Activated CD4-positive, alpha-beta memory T cell treated with anti-CD3 and anti-CD28 coated beads for 36 hours (primary cell): ENCODE measurements at regions of chr19 and their contacts with region 1.

Region 1: GRCh38 chr19:48492925-48493717 is 18.5 kb downstream of the LMTK3 start:
- DNase-seq: peak; percentile 92
- H3K4me3 Mint-ChIP-seq: peak overlapping the region; percentile 56
- H3K27ac Mint-ChIP-seq: no peak overlapping the region
- H3K4me1 Mint-ChIP-seq: peaks cover 31% of the 10 kb centered on the region
- H3K27me3 Mint-ChIP-seq: peaks cover 45% of the 10 kb centered on the region

Region 2: DNA sequence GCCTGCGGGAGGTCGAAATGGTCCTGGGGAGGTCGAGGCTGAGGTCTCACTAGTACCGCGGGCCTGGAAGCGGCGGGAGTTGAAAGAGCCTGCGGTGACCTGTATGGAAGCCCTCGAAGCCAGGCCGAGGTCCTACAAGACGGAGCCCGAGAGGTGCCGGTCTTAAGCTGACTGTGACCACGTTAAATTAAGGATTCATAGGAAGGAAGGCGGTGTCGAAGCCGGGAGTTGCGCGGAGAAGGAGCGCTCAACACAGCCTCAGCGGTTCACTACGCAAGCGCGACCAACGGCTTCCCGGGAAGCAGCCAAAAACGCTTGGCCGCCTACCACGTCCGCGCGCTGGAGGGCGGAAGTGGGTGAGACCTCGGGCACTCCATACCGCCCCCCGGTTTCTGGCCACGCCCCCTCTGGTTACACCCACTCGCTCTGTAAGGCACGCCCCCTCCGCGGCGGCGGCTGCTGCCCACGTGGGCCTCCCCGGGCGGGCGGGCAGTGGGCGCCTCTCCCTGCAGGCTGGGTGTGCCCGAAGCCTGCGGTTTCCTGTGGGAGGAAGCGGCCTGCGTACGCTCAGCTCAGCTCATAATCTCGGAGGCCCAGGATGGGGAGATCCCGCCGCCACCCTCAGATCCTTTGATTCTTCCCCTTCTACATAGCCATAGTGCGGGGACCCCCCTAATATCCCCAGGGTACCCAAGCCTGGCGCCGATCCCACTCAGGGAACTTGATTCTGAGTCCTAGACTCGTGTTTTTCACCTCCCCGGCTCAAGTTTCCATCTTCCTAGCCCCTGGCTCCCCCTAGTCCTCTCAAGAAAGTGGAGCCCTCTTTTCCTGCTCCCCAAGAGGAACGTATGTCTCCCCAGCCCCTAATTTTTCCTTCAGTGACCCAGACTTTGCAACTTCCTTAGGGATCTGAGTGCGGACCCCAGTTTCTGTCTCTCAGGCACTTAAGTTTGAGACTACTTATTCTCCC is 171.2 kb before region 1 on chr19:
- CTCF ChIA-PET with region 1: no interaction called
- POLR2A ChIA-PET with region 1: no interaction called
- intact Hi-C with region 1: loop called (anchors 5 kb)
- DNase-seq: peak; percentile 99
- H3K4me3 Mint-ChIP-seq: peak overlapping the region; percentile 88
- H3K27ac Mint-ChIP-seq: peak overlapping the region; percentile 99
- H3K4me1 Mint-ChIP-seq: peaks cover 51% of the 10 kb centered on the region
- H3K27me3 Mint-ChIP-seq: no peaks in the 10 kb centered on the region

Region 3: DNA sequence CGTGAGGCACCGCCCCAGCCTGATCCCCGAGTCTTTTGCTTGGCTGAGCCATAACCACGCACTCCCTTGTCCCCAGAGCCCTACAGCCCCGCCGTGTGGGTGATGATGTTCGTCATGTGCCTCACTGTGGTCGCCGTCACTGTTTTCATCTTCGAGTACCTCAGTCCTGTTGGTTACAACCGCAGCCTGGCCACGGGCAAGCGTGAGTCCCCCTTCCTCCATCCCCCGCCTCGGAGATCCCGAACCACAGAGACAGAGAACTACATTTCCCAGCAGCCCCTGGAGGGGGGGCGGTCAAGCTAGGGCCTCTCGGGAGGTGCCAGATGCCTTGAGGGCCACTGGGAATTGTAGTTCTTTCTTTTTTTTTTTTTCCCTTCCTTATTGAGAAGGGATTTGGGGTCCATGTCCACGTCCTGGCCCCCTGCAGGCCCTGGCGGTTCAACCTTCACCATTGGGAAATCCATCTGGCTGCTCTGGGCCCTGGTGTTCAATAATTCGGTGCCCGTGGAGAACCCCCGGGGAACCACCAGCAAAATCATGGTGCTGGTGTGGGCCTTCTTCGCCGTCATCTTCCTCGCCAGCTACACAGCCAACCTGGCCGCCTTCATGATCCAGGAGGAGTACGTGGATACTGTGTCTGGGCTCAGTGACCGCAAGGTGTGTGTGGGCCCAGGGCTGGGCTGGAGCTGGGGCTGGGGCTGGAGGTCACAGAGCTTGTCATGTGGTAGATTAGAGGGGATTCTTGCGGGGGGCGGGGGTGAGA is 73.8 kb before region 1 on chr19:
- CTCF ChIA-PET with region 1: no interaction called
- POLR2A ChIA-PET with region 1: no interaction called
- intact Hi-C with region 1: loop called (anchors 5 kb)
- DNase-seq: peak; percentile 87
- H3K4me3 Mint-ChIP-seq: peak overlapping the region; percentile 67
- H3K27ac Mint-ChIP-seq: peak overlapping the region; percentile 19
- H3K4me1 Mint-ChIP-seq: peaks cover 27% of the 10 kb centered on the region
- H3K27me3 Mint-ChIP-seq: peaks cover 9% of the 10 kb centered on the region

Region 4: DNA sequence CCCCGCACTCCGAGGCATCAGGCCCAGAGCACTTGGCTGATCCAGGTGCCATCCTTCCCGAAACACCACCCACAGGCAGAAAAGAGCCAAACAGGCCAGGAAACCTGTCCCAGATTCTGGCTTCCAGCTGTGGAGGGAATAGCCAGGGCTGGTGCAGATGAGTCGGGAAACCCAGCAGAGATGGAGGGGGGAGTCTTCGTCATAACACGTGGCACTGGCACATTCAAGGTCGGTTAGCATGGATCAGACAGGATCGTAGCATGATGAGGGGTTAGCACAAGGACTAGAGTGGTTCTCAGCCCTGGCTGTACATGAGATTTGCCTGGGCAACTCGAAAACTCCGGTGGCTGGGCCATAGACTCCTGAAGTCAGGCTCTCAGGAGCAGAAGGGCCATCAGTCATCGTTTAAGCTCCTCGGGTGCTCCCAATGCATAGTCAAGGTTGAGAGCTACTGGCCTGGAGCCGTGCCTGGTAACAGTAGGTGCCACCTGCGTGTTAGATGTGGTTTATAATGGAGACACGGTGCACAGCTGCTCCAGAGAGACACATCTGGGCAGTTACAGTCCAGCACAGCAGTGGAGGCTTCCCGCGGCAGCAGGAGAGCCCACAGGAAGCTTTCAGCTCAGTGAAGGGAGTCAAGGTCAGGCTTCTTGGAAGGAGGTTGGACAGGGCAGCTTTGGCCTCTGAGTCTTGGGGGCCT is 17.6 kb before region 1 on chr19:
- CTCF ChIA-PET with region 1: interaction called, 30 read pairs
- POLR2A ChIA-PET with region 1: no interaction called
- intact Hi-C with region 1: no loop called
- DNase-seq: no peak
- H3K4me3 Mint-ChIP-seq: no peak overlapping the region
- H3K27ac Mint-ChIP-seq: peak overlapping the region; percentile 46
- H3K4me1 Mint-ChIP-seq: peaks cover 3% of the 10 kb centered on the region
- H3K27me3 Mint-ChIP-seq: no peaks in the 10 kb centered on the region

Region 5: DNA sequence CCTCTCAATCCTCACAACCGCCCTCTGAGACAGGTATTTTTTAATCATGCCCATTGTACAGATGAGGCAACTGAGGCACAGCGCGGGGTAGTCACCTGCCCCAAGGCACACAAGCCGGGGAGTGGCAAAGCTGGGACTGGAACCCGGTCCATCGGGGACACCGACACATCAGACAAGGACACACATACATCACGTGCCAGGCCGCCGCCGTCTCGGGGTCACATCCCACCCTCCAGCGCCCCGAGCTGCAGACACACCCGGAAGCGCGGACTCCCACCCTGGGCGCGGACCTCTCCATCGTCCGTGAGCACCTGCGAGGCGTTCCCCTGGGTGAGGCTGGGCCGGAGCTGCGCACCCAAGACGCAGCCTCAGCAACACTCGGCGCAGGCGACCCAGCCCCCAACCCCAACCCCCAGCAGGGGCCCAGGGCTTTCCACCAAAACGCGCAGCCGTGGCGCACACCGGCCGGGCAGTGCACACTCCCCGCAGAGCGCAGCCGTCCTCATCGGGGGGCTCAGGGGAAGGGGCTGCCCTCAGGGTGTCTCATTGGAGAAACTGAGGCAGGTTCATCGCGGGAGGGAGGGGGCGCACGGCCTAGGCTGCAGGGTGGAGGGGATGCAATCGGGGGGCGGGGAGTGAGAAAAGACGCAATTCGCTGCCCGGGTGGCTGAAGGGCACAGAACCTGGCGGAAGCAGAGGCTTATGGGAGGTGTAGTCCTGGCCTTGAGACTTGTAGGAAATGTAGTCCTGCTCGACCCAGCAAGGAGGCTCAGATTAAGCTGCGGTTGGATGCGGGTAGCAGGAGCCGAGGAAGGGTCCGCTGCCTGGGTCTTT is 20.4 kb after region 1 on chr19:
- CTCF ChIA-PET with region 1: interaction called, 13 read pairs
- POLR2A ChIA-PET with region 1: interaction called, 3 read pairs
- intact Hi-C with region 1: loop called (anchors 1 kb)
- DNase-seq: peak; percentile 85
- H3K4me3 Mint-ChIP-seq: no peak overlapping the region
- H3K27ac Mint-ChIP-seq: peak overlapping the region; percentile 58
- H3K4me1 Mint-ChIP-seq: peaks cover 14% of the 10 kb centered on the region
- H3K27me3 Mint-ChIP-seq: no peaks in the 10 kb centered on the region

Region 6: DNA sequence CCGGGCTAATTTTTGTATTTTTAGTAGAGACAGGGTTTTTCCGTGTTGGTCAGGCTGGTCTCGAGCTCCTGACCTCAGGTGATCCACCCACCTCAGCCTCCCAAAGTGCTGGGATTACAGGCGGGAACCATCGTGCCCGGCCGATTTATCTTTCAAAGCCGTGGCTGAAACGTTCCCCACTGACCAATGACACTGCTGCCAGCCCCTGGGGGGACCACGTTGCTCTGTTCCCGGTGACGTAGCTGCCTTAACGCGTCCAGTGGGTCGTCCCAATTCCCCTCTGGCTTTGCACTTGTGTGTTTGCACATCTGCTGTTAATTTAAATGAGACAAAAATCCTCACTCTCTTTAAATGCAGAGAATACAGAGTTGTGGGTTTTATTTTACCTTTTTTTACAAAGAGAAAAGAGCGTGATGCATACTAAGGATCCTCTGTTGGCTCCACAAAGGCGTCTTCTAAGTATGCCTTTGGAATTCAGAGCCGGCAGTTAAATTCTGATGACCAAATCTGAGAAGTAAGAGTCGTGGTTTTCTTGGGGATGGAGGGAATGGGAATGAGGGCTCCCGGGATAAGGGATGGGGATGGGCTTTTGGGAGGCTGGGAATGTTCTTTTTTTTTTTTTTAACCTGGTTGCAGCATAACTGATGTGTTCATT is 37.1 kb after region 1 on chr19:
- CTCF ChIA-PET with region 1: no interaction called
- POLR2A ChIA-PET with region 1: no interaction called
- intact Hi-C with region 1: no loop called
- DNase-seq: no peak
- H3K4me3 Mint-ChIP-seq: no peak overlapping the region
- H3K27ac Mint-ChIP-seq: no peak overlapping the region
- H3K4me1 Mint-ChIP-seq: no peaks in the 10 kb centered on the region
- H3K27me3 Mint-ChIP-seq: peaks cover 5% of the 10 kb centered on the region

Region 7: GRCh38 chr19:48608798-48609263 is 115.7 kb after region 1 on chr19:
- CTCF ChIA-PET with region 1: interaction called, 42 read pairs
- POLR2A ChIA-PET with region 1: no interaction called
- intact Hi-C with region 1: no loop called
- DNase-seq: peak; percentile 73
- H3K4me3 Mint-ChIP-seq: no peak overlapping the region
- H3K27ac Mint-ChIP-seq: no peak overlapping the region
- H3K4me1 Mint-ChIP-seq: no peaks in the 10 kb centered on the region
- H3K27me3 Mint-ChIP-seq: no peaks in the 10 kb centered on the region